OCI-LY7 (cell line): ENCODE measurements at regions of chr18 and their contacts with region 1.

Region 1: GRCh38 chr18:23131693-23132319 is 3.5 kb upstream of the CABLES1 start:
- DNase-seq: peak; percentile 88
- H3K4me3 ChIP-seq: no peak overlapping the region
- H3K27ac ChIP-seq: peak overlapping the region; percentile 6
- H3K4me1 ChIP-seq: peaks cover 55% of the 10 kb centered on the region
- CTCF ChIP-seq: peak; percentile 95

Region 2: DNA sequence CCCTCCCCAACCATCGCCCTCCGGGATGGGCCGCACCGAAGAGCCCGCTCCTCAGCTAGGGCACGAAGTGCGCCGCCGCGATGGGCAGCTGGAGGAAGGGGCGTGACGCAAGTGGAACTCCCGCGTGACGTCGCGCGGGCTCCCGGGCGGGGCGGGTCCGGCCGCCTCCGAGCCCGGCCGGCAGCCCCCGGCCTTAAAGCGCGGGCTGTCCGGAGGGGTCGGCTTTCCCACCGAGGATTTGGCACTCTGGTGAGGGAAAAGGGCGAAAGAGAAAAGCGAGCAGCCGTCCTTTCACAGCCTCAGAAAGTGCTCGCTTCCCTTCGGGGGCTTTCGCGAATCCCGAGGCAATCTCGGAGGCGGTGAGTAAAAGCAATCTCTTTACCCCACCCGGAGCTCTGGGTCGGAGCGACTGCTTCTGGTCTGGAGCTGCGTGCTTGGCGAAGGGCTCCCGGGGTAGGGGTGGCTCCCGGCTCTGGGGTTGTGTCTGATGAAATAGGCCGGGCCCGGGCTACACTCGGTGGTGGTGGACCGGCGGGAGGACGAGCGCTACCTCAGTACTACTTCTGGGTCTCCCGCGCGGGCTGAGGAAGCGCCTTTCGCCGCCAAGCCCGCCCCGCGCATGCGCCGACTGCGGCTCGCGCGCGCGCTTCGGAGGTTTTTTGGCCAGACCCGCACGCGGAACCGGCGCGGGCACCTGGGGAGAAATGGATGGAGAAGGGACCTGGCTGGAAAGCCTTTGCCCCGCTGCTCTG is 198.4 kb before region 1 on chr18 and contains the start of gene RBBP8:
- CTCF ChIA-PET with region 1: no interaction called
- POLR2A ChIA-PET with region 1: interaction called, 6 read pairs
- intact Hi-C with region 1: loop called (anchors 5 kb)
- DNase-seq: peak; percentile 91
- H3K4me3 ChIP-seq: peak within 1 kb of the TSS; percentile 77
- H3K27ac ChIP-seq: peak within 1 kb of the TSS; percentile 88
- H3K4me1 ChIP-seq: peaks cover 37% of the 10 kb centered on the region
- CTCF ChIP-seq: no peak
- total RNA-seq, gene RBBP8: 51.0 and 57.8 TPM in 2 replicates

Region 3: DNA sequence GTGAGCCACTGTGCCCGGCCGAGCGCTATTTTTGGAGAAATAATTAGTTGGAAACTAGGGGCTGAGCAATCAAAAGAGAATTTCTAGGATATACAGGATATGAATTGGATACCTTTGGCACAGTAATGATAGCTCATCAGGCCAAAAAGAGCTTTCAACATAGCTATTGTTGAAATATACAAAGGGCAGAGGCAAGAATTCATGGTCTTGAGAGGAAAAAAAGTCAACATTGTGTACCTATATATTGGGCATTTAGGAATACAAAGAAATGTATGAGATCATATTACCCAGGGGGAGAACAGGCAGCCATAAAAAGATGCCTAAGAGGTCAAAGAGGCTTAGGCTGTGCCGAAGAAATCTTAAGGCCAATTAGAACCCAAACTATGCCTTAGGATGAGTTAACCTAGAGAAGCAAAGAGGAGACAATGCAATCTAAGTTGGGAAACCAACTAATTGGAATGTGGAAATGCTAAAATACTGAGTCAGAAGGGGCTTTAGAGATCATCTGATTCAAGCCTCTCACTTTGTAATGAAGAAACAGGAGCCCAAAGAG is 99.7 kb before region 1 on chr18:
- CTCF ChIA-PET with region 1: no interaction called
- POLR2A ChIA-PET with region 1: no interaction called
- intact Hi-C with region 1: loop called (anchors 5 kb)
- DNase-seq: no peak
- H3K4me3 ChIP-seq: no peak overlapping the region
- H3K27ac ChIP-seq: no peak overlapping the region
- H3K4me1 ChIP-seq: no peaks in the 10 kb centered on the region
- CTCF ChIP-seq: no peak

Region 4: DNA sequence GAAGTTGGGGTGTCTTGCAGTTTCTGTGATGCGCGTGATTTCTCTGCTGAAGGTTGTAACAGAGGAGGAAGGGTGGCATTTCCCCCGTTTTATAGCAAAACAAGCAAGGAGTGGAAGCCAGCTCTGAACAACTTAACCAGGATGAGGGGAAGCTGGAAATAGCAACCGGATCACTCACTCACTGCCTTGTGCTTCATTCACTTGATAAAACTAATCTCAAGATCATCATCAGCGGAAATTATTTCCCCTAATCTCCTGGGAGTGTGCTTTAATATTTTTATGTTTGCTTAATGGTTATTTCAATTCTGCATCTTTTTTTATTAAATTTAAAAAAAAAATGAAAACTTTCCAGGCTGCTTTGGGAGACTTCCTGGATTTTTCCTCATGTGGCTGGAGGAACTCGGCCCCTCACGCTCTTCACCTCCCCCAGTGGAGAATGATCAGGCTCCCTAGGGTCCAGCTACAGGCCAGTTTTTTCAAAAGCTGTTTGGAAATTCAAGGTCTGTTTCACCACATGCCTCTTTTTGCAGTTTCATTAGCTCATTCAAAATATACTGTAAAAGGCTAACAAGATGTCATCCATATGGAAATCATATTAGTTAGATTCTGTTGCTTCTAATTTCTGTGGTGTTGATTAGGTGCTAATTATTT is 35.2 kb after region 1 on chr18:
- CTCF ChIA-PET with region 1: no interaction called
- POLR2A ChIA-PET with region 1: no interaction called
- intact Hi-C with region 1: no loop called
- DNase-seq: no peak
- H3K4me3 ChIP-seq: no peak overlapping the region
- H3K27ac ChIP-seq: no peak overlapping the region
- H3K4me1 ChIP-seq: no peaks in the 10 kb centered on the region
- CTCF ChIP-seq: no peak

Region 5: DNA sequence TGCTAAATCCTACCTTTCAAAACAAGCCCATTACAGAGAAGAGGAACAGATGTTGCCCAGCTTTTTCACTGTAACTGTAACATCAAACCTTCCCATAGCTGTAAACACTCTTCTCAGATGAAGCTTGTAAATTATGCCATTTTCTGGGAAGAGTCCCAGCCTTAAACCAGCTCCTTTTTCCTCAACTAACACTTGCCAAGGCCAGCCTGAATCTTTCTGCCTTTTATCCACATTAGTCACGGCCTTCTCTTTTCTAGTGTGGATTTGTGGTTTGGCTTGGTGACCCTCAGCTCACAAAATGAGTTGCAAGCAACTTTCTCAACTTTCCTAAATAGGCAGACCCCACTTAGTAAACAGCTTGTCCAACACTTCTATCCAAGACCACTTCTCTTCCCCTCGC is 93.7 kb after region 1 on chr18:
- CTCF ChIA-PET with region 1: interaction called, 7 read pairs
- POLR2A ChIA-PET with region 1: interaction called, 36 read pairs
- intact Hi-C with region 1: loop called (anchors 1 kb)
- DNase-seq: no peak
- H3K4me3 ChIP-seq: no peak overlapping the region
- H3K27ac ChIP-seq: peak overlapping the region; percentile 100
- H3K4me1 ChIP-seq: peaks cover 93% of the 10 kb centered on the region
- CTCF ChIP-seq: no peak

Region 6: DNA sequence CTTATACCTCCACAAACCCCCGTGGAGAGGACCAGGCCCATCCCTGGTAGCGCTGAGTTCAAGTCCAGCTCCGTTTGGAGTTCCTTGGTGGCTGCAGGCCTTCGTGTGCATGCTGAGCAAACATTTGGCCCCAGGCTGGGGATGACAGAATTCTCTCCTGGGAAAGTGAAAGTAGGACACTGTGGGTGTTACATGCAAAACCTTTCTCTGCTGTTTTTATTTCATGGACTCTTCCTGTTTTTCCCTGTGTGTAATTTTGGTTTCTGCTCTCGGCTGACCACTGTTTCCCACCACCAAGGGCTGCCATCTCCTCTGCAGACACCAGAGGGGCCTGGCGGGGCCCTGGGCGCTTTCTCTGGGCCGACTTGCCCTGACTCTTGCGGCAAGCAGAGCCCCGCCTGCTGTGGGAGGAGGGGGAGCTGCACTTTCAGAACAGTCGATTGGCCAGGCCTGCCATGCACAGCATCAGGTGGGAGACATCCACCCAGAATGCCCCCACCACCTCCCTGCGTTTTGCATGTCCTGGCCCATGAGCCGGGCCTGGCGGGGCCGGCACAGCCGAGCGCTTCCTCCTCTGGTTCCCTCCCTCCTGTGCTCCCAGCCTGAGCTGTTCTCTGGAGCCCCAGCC is 105.8 kb after region 1 on chr18:
- CTCF ChIA-PET with region 1: interaction called, 5 read pairs
- POLR2A ChIA-PET with region 1: interaction called, 9 read pairs
- intact Hi-C with region 1: loop called (anchors 1 kb)
- DNase-seq: peak; percentile 93
- H3K4me3 ChIP-seq: peak overlapping the region; percentile 43
- H3K27ac ChIP-seq: peak overlapping the region; percentile 95
- H3K4me1 ChIP-seq: peaks cover 80% of the 10 kb centered on the region
- CTCF ChIP-seq: peak; percentile 65

Region 7: DNA sequence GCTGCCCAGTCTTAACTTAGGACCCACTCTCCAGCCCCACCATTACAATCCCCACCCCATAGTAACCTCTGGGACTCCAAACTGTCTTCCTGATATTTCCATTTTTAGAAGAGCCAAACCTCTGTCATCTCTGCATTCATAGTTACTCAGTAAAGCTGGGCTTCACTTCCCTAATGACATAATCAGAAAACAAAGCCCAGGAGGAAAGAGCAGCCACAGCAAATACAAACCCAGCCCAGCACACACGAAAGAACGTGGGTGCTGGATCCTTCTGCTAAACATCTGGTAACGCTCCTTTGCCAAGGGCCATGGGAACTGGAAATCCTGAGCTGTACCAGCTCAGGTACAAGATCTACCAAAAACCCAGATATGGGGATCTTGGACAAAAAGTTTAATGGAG is 284.5 kb after region 1 on chr18:
- CTCF ChIA-PET with region 1: interaction called, 3 read pairs
- POLR2A ChIA-PET with region 1: interaction called, 5 read pairs
- intact Hi-C with region 1: loop called (anchors 1 kb)
- DNase-seq: no peak
- H3K4me3 ChIP-seq: no peak overlapping the region
- H3K27ac ChIP-seq: no peak overlapping the region
- H3K4me1 ChIP-seq: peaks cover 23% of the 10 kb centered on the region
- CTCF ChIP-seq: no peak

Region 8: DNA sequence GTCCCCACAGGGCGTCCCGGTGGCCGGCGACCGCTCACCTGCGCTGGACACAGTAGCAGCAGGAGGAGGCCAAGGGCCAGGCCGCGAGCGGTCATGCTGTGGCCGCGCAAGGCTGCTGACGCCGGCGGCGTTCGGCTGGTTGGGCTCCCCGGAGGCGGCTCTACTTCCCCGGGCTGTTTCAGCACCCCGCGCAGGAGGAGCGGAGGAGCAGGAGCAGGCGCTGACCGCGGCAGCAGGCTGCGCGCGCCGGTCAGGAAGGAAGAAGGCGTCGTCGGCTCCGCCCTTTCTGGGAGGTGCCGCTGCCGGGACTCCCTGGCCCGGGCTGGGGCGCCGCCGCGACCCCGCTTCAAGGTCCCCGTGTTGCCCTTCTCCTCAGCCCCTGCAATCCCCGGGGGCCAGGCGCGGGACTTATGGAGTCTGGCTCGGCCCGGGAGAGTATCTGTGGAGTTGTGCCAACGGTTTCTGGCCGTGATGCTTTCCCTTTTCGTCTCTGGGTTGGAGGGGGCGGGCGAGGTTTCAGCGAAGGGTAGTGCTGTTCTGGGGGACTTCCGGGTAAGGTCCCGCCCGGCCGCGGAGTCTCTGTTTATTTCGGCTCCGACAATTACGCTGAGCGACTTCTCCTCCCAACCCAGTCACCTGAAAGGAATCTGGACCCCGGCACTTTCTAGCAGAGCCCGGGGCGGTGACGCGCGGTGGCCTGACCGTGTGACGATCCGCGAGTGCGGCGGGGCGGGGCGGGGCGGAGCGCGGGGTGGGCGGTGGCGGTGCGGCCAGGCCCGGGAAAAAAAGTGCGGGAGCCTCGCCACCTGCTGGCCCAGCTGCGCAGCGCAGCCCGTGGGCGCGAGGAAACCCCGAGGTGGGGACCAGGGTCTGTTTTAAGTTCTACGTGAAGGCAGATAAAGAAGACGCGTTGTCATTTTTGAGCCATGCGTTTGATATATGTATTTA is 454.7 kb after region 1 on chr18 and contains the start of gene NPC1:
- CTCF ChIA-PET with region 1: no interaction called
- POLR2A ChIA-PET with region 1: no interaction called
- intact Hi-C with region 1: loop called (anchors 5 kb)
- DNase-seq: peak; percentile 94
- H3K4me3 ChIP-seq: peak within 1 kb of the TSS; percentile 87
- H3K27ac ChIP-seq: peak within 1 kb of the TSS; percentile 85
- H3K4me1 ChIP-seq: peaks cover 22% of the 10 kb centered on the region
- CTCF ChIP-seq: peak; percentile 84
- total RNA-seq, gene NPC1: 22.3 and 26.0 TPM in 2 replicates